Esophagus squamous epithelium (tissue), 5 donors: ENCODE measurements at regions of chr2 and their contacts with region 1.

Region 1: DNA sequence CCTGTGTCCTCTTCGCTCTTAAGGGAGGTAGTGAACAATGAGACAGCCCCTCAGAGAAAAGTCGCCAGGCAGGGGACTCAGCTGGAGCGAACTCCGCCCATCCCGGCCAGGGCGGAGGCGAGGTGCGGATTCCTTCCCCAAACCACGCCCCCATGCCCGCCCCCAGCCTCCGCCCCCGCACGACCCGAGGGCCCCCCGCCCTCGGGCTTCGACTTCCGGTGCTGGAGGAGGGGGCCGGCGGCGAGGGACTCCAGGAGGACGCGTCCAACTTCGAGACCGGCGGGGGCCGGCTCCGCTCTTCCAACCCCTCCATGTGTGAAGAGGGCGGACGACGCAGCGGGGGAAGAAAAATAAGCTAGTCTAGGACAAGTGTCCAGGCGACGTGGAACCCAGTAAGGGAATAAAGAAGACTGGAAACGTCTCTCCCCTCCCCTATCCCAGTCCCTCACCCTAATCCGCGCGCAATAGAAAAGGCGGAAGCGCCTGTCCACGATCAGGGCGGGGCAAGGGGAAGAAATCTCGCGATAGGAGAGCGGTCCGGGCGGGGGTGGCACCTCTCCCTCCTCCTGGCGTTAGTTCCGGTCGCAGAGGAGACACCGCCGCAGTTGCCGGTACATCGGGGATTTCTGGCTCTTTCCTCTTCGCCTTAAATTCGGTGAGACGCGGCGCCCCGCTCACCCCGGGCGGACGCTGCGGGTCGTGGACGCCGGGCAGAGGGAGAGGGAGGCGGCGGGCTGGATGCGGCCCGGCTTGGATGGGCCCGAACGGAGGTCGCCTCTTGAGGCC is at the start of gene BZW1:
- DNase-seq: peak; percentile 85
- H3K4me3 ChIP-seq: peak within 1 kb of the TSS; percentile 68 to 99 (median 90)
- H3K27ac ChIP-seq: peak within 1 kb of the TSS; percentile 95 to 100 (median 99)
- H3K4me1 ChIP-seq: peaks cover 18 to 50% (median 35%) of the 10 kb centered on the region in 3 donors
- H3K27me3 ChIP-seq: no peaks in the 10 kb centered on the region
- CTCF ChIP-seq: peak in 3 of 6 experiments; percentile 3 to 13 (median 8)
- POLR2A ChIP-seq: peak in 3 of 4 donors; percentile 85 to 98 (median 96)
- total RNA-seq, gene BZW1: 129 to 303 (median 251) TPM

Region 2: GRCh38 chr2:200716386-200716785 is 95.1 kb before region 1 on chr2:
- intact Hi-C with region 1: loop called (anchors 5 kb)
- DNase-seq: no peak
- H3K4me3 ChIP-seq: no peak overlapping the region
- H3K27ac ChIP-seq: no peak overlapping the region
- H3K4me1 ChIP-seq: peaks cover 4 to 15% (median 4%) of the 10 kb centered on the region in 3 donors
- H3K27me3 ChIP-seq: no peaks in the 10 kb centered on the region
- CTCF ChIP-seq: no peak
- POLR2A ChIP-seq: no peak

Region 3: DNA sequence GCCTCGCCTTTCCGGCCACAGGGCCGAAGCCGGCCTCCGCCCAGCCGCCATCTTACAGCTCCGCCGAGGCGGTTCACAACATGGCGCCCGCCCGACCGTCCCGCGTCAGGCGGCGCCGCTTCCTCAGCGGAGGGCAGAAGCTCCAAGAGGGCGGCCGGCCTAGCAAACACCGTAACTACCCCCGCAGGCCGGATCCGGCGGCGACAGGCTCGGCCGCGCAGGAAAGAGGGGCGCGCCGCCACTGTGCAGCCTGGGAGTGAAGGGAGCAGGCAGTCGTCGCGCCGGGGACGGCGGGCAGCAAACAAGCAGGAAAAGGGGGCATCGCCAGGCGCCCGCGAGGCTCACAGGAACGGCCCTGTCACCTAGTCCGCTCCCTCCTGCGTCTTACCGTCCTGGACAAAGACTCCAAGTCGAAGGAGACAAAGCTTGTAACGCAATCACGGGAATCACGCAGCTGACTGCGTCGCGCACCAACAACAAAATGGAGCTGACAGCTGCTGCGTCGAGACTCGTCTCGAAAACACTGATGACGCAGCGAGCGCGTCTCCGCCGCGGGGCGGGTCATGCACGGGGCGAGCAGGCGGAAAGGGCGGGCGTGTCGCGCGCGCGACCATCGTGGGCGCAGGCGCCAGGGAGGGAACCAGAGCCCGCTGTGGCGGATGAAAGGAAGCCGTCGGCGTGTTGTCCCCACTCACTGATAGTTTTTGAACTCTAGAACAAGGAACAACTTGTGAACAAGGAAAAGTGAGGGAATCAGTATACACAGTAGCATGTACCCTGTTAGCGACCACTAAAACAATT is 52.8 kb after region 1 on chr2 and contains the start of gene CLK1:
- intact Hi-C with region 1: loop called (anchors 5 kb)
- DNase-seq: peak; percentile 85
- H3K4me3 ChIP-seq: peak within 1 kb of the TSS; percentile 81 to 100 (median 94)
- H3K27ac ChIP-seq: peak within 1 kb of the TSS; percentile 99 to 100 (median 100)
- H3K4me1 ChIP-seq: peaks cover 8 to 58% (median 19%) of the 10 kb centered on the region in 3 donors
- H3K27me3 ChIP-seq: no peaks in the 10 kb centered on the region
- CTCF ChIP-seq: peak in 1 of 6 experiments; percentile 15
- POLR2A ChIP-seq: peak; percentile 36 to 100 (median 99)
- total RNA-seq, gene CLK1: 59.4 to 161 (median 74.7) TPM